Activated CD4-positive, alpha-beta T cell treated with anti-CD3 and anti-CD28 coated beads, Interleukin-2, amount 10 ng/mL, durations not matched to agents 24 days and 14 days (primary cell): ENCODE measurements at regions of chr6 and their contacts with region 1.

Region 1: DNA sequence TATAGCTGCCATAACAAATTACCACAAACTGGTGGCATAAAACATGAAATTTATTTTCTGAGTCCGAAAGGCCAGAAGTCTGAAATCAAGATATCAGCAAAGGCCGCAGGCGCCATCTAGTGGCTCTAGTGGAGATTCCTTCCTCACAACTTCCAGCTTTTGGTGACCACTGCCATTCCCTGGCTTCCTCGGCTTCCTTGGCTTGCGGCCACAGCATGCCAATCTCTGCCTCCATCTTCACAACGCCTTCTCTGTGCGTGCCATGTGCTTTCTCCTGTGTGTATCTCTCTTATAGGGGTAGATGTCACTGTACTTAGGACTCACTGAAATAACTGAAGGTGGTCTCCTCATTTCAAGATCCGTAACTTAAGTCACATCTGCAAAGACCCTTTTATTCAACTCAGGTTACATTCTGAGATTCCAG is 5.4 kb upstream of the PLAGL1 start:
- DNase-seq: peak; percentile 87
- H3K4me3 Mint-ChIP-seq: no peak overlapping the region
- H3K27ac Mint-ChIP-seq: no peak overlapping the region
- H3K4me1 Mint-ChIP-seq: peaks cover 12% of the 10 kb centered on the region
- H3K27me3 Mint-ChIP-seq: peaks cover 30% of the 10 kb centered on the region

Region 2: GRCh38 chr6:142692942-142693341 is 1320.6 kb before region 1 on chr6:
- intact Hi-C with region 1: loop called (anchors 10 kb)
- DNase-seq: peak; percentile 88
- H3K4me3 Mint-ChIP-seq: no peak overlapping the region
- H3K27ac Mint-ChIP-seq: peak overlapping the region; percentile 2
- H3K4me1 Mint-ChIP-seq: peaks cover 15% of the 10 kb centered on the region
- H3K27me3 Mint-ChIP-seq: no peaks in the 10 kb centered on the region

Region 3: GRCh38 chr6:143368426-143368825 is 645.1 kb before region 1 on chr6:
- intact Hi-C with region 1: no loop called
- DNase-seq: no peak
- H3K4me3 Mint-ChIP-seq: no peak overlapping the region
- H3K27ac Mint-ChIP-seq: no peak overlapping the region
- H3K4me1 Mint-ChIP-seq: peaks cover 3% of the 10 kb centered on the region
- H3K27me3 Mint-ChIP-seq: peaks cover 4% of the 10 kb centered on the region

Region 4: DNA sequence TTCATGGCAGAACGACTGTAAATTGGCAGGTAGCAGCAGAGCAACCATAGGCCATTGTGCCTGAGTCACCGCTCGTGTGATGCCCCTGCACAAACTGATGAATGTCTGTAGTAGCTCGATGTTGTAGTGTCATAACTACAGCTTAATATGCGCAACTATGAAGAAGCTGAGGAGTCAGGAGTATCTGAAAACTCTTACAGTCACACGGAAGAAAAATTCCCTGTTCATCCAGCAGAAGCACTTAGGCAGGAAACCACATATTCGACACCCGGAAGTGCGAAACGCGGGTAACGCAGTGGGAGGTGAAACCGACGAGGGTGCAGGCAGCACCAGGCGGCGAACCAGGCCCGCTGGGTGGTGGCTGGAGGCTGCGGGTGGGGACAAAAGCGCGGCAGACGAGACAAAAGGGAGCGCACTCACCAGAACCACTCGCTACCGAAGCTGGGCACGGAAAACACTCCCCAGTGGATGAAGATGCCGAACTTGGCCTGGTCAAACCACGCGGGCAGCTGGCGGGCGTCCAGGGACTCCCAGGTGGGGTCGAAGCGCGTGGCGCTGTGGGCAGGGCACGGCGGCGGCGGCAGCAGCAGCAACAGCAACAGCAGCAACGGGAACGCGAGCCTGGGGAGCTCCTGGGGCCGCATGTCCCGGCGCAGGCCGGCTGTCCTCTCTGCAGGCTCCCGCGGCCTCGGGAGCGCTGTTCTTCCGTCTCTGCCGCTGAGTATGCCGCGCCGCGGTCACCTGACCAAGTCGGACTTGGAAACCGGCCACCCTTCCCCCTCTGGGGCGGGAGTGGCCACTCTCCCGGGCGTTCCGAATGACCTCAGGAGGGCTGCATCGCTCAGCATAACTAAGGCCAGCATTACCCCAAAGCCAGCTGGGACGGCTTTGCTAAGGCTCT is 502.3 kb before region 1 on chr6 and contains the start of gene FUCA2:
- intact Hi-C with region 1: loop called (anchors 1 kb)
- DNase-seq: peak; percentile 92
- H3K4me3 Mint-ChIP-seq: peak within 1 kb of the TSS; percentile 97
- H3K27ac Mint-ChIP-seq: peak within 1 kb of the TSS; percentile 99
- H3K4me1 Mint-ChIP-seq: peaks cover 34% of the 10 kb centered on the region
- H3K27me3 Mint-ChIP-seq: no peaks in the 10 kb centered on the region
- total RNA-seq, gene FUCA2: 14.4 and 16.1 TPM in 2 replicates

Region 5: DNA sequence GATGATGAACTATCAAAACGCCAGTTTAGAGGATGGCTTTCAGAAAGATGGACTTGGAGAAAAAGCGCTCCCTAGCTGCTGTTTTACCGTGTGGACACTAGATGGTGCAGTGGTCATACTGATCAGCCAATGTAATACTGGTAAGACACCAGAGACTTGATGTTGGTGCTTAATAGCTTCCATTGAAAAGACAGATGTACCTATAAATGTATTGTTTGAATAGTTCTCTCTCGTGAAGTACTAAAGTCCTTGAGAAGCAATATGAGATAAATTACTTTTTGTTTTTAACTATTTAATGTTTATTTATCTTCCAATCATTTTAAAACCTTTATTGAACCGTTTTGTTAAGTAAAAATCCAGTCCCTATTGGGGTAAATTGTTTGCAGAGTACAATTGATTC is 438.1 kb before region 1 on chr6:
- intact Hi-C with region 1: loop called (anchors 1 kb)
- DNase-seq: peak; percentile 88
- H3K4me3 Mint-ChIP-seq: no peak overlapping the region
- H3K27ac Mint-ChIP-seq: no peak overlapping the region
- H3K4me1 Mint-ChIP-seq: peaks cover 5% of the 10 kb centered on the region
- H3K27me3 Mint-ChIP-seq: no peaks in the 10 kb centered on the region

Region 6: DNA sequence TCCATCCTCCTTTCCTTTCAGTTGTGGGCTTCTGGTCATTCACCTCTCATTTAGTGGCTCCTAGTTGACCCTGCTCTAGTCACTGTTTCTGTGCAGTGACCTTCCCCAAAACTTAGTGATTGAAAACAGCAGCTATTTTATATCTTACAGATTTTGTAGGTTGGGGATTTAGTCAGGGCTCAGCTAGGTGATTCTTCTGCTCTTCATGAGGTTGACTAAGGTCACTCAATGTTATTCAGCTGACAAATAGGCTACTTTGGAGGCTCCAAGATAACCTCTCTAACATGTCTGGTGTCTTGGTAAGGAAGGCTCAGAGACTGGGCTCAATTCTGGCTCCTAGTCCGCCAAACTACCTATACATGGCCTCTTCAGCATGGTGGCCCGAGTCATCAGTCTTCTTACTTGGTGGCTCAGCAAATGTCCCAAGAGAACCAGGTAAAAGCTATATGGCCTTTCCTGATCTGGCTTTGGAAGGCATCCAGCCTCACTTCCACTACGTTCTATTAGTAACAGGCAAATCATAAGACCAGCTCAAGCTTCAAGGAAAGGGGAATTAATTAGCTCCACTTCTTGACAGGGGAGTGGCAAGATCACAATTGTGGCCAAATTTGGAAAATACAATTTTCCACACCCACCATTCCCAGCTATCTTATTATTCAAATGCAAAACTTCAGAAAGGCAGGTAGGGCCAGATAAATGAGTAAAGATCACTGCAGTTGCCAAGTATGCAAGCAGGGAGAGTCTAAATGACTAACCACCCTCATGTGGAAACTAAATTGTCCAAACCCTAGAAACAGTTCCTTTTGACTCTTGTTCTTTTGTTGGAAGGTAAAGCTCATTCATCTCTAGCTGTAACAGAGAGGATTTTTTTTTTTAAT is 220.9 kb before region 1 on chr6:
- intact Hi-C with region 1: no loop called
- DNase-seq: no peak
- H3K4me3 Mint-ChIP-seq: no peak overlapping the region
- H3K27ac Mint-ChIP-seq: no peak overlapping the region
- H3K4me1 Mint-ChIP-seq: no peaks in the 10 kb centered on the region
- H3K27me3 Mint-ChIP-seq: no peaks in the 10 kb centered on the region

Region 7: GRCh38 chr6:143940011-143940597 is 73.4 kb before region 1 on chr6:
- intact Hi-C with region 1: loop called (anchors 1 kb)
- DNase-seq: peak; percentile 86
- H3K4me3 Mint-ChIP-seq: no peak overlapping the region
- H3K27ac Mint-ChIP-seq: no peak overlapping the region
- H3K4me1 Mint-ChIP-seq: peaks cover 7% of the 10 kb centered on the region
- H3K27me3 Mint-ChIP-seq: peaks cover 2% of the 10 kb centered on the region

Region 8: GRCh38 chr6:143973097-143973966 is 40.2 kb before region 1 on chr6:
- intact Hi-C with region 1: no loop called
- DNase-seq: no peak
- H3K4me3 Mint-ChIP-seq: no peak overlapping the region
- H3K27ac Mint-ChIP-seq: no peak overlapping the region
- H3K4me1 Mint-ChIP-seq: peaks cover 2% of the 10 kb centered on the region
- H3K27me3 Mint-ChIP-seq: peaks cover 5% of the 10 kb centered on the region

Region 9: DNA sequence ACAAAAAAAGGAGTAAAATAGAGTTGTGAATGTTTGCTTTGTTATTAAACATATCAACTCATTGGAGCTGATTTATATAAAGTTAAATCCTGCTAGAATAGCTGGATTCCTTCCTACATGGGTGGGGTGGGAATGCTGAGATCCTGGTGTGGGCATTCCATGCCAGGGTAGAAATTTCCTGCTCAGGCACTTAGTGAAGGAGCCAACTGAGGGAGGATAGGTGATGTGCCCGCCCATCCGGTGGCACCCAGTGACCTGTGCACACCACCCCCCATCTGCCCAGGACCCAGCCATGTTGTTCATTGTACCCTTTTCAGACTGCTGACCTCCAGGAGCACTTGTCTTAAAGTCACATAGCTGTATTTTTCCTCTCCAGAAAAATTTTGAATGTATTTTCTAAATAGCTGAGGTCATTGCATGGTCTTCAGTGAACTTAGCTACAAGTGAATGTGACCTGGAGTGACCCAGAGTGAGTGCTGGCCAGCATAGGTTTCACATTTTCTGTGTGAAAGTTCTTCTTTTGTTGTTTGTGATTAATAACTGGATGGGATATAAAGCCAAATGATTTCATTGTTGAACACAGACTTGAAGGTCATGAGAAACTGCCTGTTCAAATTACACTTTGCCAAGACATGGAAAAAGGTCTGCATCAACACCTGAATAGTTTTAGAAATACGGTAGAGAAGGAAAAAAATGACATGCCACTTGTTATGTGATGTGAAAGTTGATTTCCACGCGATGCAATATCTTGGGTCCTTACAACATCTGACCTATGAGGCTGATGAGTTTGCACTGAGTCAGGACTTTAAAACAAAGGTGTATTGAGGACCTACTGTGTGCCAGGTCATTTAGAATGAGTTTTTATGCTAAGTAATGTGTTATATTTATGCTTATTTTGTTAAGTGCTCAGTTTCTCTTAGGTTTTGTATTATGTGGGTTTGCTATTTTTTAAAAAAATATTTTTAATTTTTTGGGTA is 348.8 kb after region 1 on chr6:
- intact Hi-C with region 1: no loop called
- DNase-seq: peak; percentile 43
- H3K4me3 Mint-ChIP-seq: no peak overlapping the region
- H3K27ac Mint-ChIP-seq: no peak overlapping the region
- H3K4me1 Mint-ChIP-seq: peaks cover 37% of the 10 kb centered on the region
- H3K27me3 Mint-ChIP-seq: no peaks in the 10 kb centered on the region